Endothelial cell of umbilical vein (primary cell): ENCODE measurements at regions of chr17 and their contacts with region 1.

Region 1: GRCh38 chr17:64129764-64130558 is at the start of gene ERN1:
- DNase-seq: peak; percentile 92
- H3K4me3 ChIP-seq: peak within 1 kb of the TSS; percentile 68 to 92 (median 73)
- H3K27ac ChIP-seq: peak within 1 kb of the TSS; percentile 91
- H3K4me1 ChIP-seq: peaks cover 23% of the 10 kb centered on the region
- H3K27me3 ChIP-seq: no peaks in the 10 kb centered on the region
- CTCF ChIP-seq: no peak
- POLR2A ChIP-seq: peak; percentile 97
- total RNA-seq, gene ERN1: 14.7 and 21.5 TPM in 2 replicates

Region 2: DNA sequence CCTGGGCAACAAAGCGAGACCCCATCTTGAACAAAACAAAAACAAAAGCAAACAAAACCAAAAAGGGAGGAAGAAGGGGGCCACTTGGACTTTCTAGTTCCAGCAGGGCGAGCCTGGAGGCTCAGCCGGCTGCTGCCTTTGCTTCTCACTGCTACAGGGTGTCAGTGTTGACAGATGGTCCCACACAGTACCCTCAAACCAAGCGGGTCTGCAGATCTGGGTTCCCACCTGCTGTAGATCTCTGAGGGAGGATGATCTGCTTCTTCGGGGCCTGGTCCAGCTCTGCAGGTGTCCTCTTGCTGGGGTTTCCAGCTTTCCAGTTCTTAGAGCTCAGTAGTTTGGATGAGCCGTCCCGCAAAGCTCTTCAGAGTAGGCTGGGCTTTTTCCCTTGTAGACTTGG is 225.6 kb before region 1 on chr17:
- CTCF ChIA-PET with region 1: interaction called, 19 read pairs
- POLR2A ChIA-PET with region 1: interaction called, 3 read pairs
- dilution Hi-C with region 1: no loop called
- intact Hi-C with region 1: no loop called
- DNase-seq: no peak
- H3K4me3 ChIP-seq: no peak overlapping the region
- H3K27ac ChIP-seq: no peak overlapping the region
- H3K4me1 ChIP-seq: no peaks in the 10 kb centered on the region
- H3K27me3 ChIP-seq: peaks cover 5 to 8% of the 10 kb centered on the region in 2 experiments
- CTCF ChIP-seq: no peak
- POLR2A ChIP-seq: no peak

Region 3: GRCh38 chr17:63998050-63998720 is 131.8 kb before region 1 on chr17 and contains the start of gene PRR29:
- CTCF ChIA-PET with region 1: interaction called, 39 read pairs
- POLR2A ChIA-PET with region 1: interaction called, 12 read pairs
- dilution Hi-C with region 1: no loop called
- intact Hi-C with region 1: no loop called
- DNase-seq: peak; percentile 71
- H3K4me3 ChIP-seq: peak within 1 kb of the TSS; percentile 12 to 59 (median 37)
- H3K27ac ChIP-seq: peak within 1 kb of the TSS; percentile 23
- H3K4me1 ChIP-seq: peaks cover 42% of the 10 kb centered on the region
- H3K27me3 ChIP-seq: no peaks in the 10 kb centered on the region
- CTCF ChIP-seq: no peak
- POLR2A ChIP-seq: no peak
- total RNA-seq, gene PRR29: 0.78 and 1.2 TPM in 2 replicates

Region 4: GRCh38 chr17:64041912-64042311 is 88.0 kb before region 1 on chr17:
- CTCF ChIA-PET with region 1: interaction called, 20 read pairs
- POLR2A ChIA-PET with region 1: no interaction called
- dilution Hi-C with region 1: loop called (anchors 25 kb)
- intact Hi-C with region 1: no loop called
- DNase-seq: no peak
- H3K4me3 ChIP-seq: no peak overlapping the region
- H3K27ac ChIP-seq: no peak overlapping the region
- H3K4me1 ChIP-seq: no peaks in the 10 kb centered on the region
- H3K27me3 ChIP-seq: no peaks in the 10 kb centered on the region
- CTCF ChIP-seq: no peak
- POLR2A ChIP-seq: no peak

Region 5: GRCh38 chr17:64081802-64082799 is 47.9 kb before region 1 on chr17:
- CTCF ChIA-PET with region 1: interaction called, 27 read pairs
- POLR2A ChIA-PET with region 1: interaction called, 3 read pairs
- dilution Hi-C with region 1: no loop called
- intact Hi-C with region 1: loop called (anchors 1 kb)
- DNase-seq: peak; percentile 87
- H3K4me3 ChIP-seq: no peak overlapping the region
- H3K27ac ChIP-seq: peak overlapping the region; percentile 58
- H3K4me1 ChIP-seq: peaks cover 29% of the 10 kb centered on the region
- H3K27me3 ChIP-seq: no peaks in the 10 kb centered on the region
- CTCF ChIP-seq: no peak
- POLR2A ChIP-seq: peak; percentile 30

Region 6: GRCh38 chr17:64174686-64175456 is 44.9 kb after region 1 on chr17:
- CTCF ChIA-PET with region 1: interaction called, 26 read pairs
- POLR2A ChIA-PET with region 1: no interaction called
- dilution Hi-C with region 1: no loop called
- intact Hi-C with region 1: loop called (anchors 1 kb)
- DNase-seq: peak; percentile 67
- H3K4me3 ChIP-seq: no peak overlapping the region
- H3K27ac ChIP-seq: peak overlapping the region; percentile 19
- H3K4me1 ChIP-seq: peaks cover 40% of the 10 kb centered on the region
- H3K27me3 ChIP-seq: no peaks in the 10 kb centered on the region
- CTCF ChIP-seq: no peak
- POLR2A ChIP-seq: no peak